CD8-positive, alpha-beta T cell (primary cell): ENCODE measurements at regions of chr18 and their contacts with region 1.

Region 1: GRCh38 chr18:67515945-67516538 is 478 bp downstream of the DSEL start:
- DNase-seq: peak; percentile 24 to 84 (median 60)
- ATAC-seq: peak; percentile 7
- H3K4me3 ChIP-seq: peak overlapping the region; percentile 72 to 79
- H3K4me3 Mint-ChIP-seq: peak overlapping the region; percentile 98
- H3K27ac ChIP-seq: peak overlapping the region in 1 of 2 experiments; percentile 43
- H3K27ac Mint-ChIP-seq: peak overlapping the region; percentile 70
- H3K4me1 ChIP-seq: peaks cover 12% of the 10 kb centered on the region
- H3K4me1 Mint-ChIP-seq: peaks cover 24% of the 10 kb centered on the region
- H3K27me3 ChIP-seq: no peaks in the 10 kb centered on the region
- H3K27me3 Mint-ChIP-seq: peaks cover 2% of the 10 kb centered on the region
- CTCF ChIP-seq: no peak

Region 2: GRCh38 chr18:66867653-66868052 is 648.4 kb before region 1 on chr18:
- CTCF ChIA-PET with region 1: no interaction called
- POLR2A ChIA-PET with region 1: no interaction called
- intact Hi-C with region 1: no loop called
- DNase-seq: no peak
- ATAC-seq: no peak
- H3K4me3 ChIP-seq: no peak overlapping the region
- H3K4me3 Mint-ChIP-seq: no peak overlapping the region
- H3K27ac ChIP-seq: no peak overlapping the region
- H3K27ac Mint-ChIP-seq: no peak overlapping the region
- H3K4me1 ChIP-seq: no peaks in the 10 kb centered on the region
- H3K4me1 Mint-ChIP-seq: no peaks in the 10 kb centered on the region
- H3K27me3 ChIP-seq: no peaks in the 10 kb centered on the region
- H3K27me3 Mint-ChIP-seq: no peaks in the 10 kb centered on the region
- CTCF ChIP-seq: no peak

Region 3: DNA sequence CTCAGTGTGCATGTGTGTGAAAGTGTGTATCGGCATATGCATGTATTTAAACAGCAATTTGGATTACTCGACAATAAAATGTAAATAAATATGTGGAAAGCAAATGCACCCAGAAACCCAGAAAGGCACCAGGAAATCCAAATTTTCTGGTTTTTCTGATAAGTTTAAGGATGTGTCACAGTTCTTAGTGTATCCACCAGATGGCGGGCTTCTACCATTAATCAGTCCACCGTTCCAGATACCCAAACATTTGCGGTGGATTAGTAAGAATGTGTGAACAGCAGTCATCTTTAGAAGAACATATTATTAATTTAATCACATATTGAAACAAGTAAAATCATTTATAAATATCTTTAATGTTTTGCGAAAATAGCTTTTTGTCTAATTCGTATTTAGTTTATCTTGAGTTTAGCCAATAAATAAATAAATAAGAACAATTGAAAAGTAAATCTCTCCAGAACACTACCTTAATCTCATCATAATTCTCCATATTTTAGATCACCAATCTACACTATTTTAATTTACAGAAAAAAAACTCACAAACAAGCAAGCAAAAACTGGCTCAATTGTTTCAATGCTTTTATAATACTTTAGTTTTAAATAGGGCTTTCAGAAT is 298.4 kb before region 1 on chr18:
- CTCF ChIA-PET with region 1: interaction called, 6 read pairs
- POLR2A ChIA-PET with region 1: no interaction called
- intact Hi-C with region 1: loop called (anchors 1 to 5 kb)
- DNase-seq: peak; percentile 6 to 76 (median 56)
- ATAC-seq: peak; percentile 93
- H3K4me3 ChIP-seq: no peak overlapping the region
- H3K4me3 Mint-ChIP-seq: no peak overlapping the region
- H3K27ac ChIP-seq: no peak overlapping the region
- H3K27ac Mint-ChIP-seq: no peak overlapping the region
- H3K4me1 ChIP-seq: no peaks in the 10 kb centered on the region
- H3K4me1 Mint-ChIP-seq: no peaks in the 10 kb centered on the region
- H3K27me3 ChIP-seq: no peaks in the 10 kb centered on the region
- H3K27me3 Mint-ChIP-seq: no peaks in the 10 kb centered on the region
- CTCF ChIP-seq: peak; percentile 88

Region 4: GRCh38 chr18:67243799-67244587 is 272.0 kb before region 1 on chr18:
- CTCF ChIA-PET with region 1: no interaction called
- POLR2A ChIA-PET with region 1: no interaction called
- intact Hi-C with region 1: loop called in 1 of 2 experiments (anchors 1 kb)
- DNase-seq: peak in 2 of 9 experiments; percentile 10 to 23
- ATAC-seq: peak; percentile 38
- H3K4me3 ChIP-seq: peak overlapping the region; percentile 21 to 33
- H3K4me3 Mint-ChIP-seq: peak overlapping the region; percentile 84
- H3K27ac ChIP-seq: peak overlapping the region; percentile 7 to 58
- H3K27ac Mint-ChIP-seq: peak overlapping the region; percentile 92
- H3K4me1 ChIP-seq: peaks cover 31% of the 10 kb centered on the region
- H3K4me1 Mint-ChIP-seq: peaks cover 38% of the 10 kb centered on the region
- H3K27me3 ChIP-seq: no peaks in the 10 kb centered on the region
- H3K27me3 Mint-ChIP-seq: no peaks in the 10 kb centered on the region
- CTCF ChIP-seq: no peak

Region 5: DNA sequence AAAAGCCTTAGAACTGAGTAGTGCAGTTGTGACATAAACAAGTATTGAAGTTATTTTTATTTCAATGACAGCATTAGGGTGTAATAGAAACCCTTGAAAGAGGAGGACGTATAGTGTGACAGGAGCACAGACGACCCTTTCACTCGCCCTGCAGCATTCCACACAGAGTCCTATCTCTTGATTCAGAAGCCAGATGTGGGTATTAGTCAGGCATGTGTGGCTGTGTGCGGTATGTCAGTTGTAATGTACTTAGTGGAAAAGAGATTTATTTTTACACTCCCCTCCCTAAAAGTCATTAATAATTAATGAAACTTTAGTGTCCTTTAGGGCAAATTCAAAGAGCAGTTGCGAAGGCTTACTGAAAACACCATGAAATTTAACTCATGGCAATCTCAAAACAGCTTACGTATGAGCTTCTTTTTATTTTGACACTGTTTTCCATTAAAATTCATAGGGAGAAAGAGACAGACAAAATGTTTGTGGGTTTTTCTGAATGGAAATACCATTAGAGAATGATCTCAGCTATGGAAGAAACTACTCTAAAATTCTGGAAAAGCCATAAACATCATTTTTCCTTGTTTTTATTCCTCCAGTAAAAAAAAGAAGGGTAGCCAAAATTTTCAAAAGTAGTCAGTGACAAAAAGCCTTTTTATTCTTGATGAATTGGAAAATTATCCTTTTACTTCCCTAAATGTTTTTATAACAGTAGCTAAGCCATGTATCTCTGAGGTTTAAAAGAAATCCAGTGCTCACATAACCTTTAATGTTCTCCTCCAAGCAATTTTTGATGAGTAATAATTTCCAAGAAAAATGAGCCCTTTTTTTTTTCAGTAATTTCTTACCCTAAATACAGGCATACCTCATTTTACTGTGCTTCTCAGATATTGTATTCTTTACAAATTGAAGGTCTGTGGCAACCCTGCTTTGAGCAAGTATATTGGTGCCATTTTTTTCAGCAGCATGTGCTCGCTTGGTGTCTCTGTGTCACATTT is 84.4 kb after region 1 on chr18:
- CTCF ChIA-PET with region 1: no interaction called
- POLR2A ChIA-PET with region 1: no interaction called
- intact Hi-C with region 1: no loop called
- DNase-seq: no peak
- ATAC-seq: no peak
- H3K4me3 ChIP-seq: no peak overlapping the region
- H3K4me3 Mint-ChIP-seq: no peak overlapping the region
- H3K27ac ChIP-seq: no peak overlapping the region
- H3K27ac Mint-ChIP-seq: no peak overlapping the region
- H3K4me1 ChIP-seq: no peaks in the 10 kb centered on the region
- H3K4me1 Mint-ChIP-seq: no peaks in the 10 kb centered on the region
- H3K27me3 ChIP-seq: no peaks in the 10 kb centered on the region
- H3K27me3 Mint-ChIP-seq: peaks cover 2% of the 10 kb centered on the region
- CTCF ChIP-seq: no peak

Region 6: DNA sequence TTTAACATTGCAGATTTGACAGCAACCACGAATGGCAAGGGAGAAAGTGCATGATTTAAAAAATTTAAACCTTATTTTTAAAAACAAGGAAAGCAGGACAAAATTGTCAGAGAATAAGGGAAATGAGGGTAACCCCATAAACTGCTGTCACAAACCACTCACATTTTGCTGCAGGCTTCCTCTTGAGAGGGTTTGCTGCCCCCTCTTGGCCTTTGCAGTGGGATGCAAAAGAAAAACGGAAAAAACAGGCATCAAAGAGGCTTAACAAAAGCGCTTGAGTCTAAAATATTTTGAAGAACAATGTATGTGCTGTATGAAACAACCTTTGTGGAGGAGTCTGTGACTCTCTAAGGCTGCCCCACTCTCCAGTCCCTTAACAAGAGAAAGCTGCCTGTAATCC is 1107.3 kb after region 1 on chr18:
- CTCF ChIA-PET with region 1: no interaction called
- POLR2A ChIA-PET with region 1: no interaction called
- intact Hi-C with region 1: loop called in 1 of 2 experiments (anchors 2 kb)
- DNase-seq: peak in 4 of 9 experiments; percentile 19 to 50 (median 41)
- ATAC-seq: no peak
- H3K4me3 ChIP-seq: no peak overlapping the region
- H3K4me3 Mint-ChIP-seq: no peak overlapping the region
- H3K27ac ChIP-seq: no peak overlapping the region
- H3K27ac Mint-ChIP-seq: no peak overlapping the region
- H3K4me1 ChIP-seq: no peaks in the 10 kb centered on the region
- H3K4me1 Mint-ChIP-seq: no peaks in the 10 kb centered on the region
- H3K27me3 ChIP-seq: no peaks in the 10 kb centered on the region
- H3K27me3 Mint-ChIP-seq: peaks cover 8% of the 10 kb centered on the region
- CTCF ChIP-seq: peak; percentile 20

Region 7: GRCh38 chr18:68660354-68661183 is 1144.5 kb after region 1 on chr18:
- CTCF ChIA-PET with region 1: interaction called, 4 read pairs
- POLR2A ChIA-PET with region 1: no interaction called
- intact Hi-C with region 1: loop called in 1 of 2 experiments (anchors 1 kb)
- DNase-seq: peak in 2 of 9 experiments; percentile 39 to 52
- ATAC-seq: no peak
- H3K4me3 ChIP-seq: no peak overlapping the region
- H3K4me3 Mint-ChIP-seq: no peak overlapping the region
- H3K27ac ChIP-seq: no peak overlapping the region
- H3K27ac Mint-ChIP-seq: no peak overlapping the region
- H3K4me1 ChIP-seq: no peaks in the 10 kb centered on the region
- H3K4me1 Mint-ChIP-seq: no peaks in the 10 kb centered on the region
- H3K27me3 ChIP-seq: no peaks in the 10 kb centered on the region
- H3K27me3 Mint-ChIP-seq: peaks cover 2% of the 10 kb centered on the region
- CTCF ChIP-seq: peak; percentile 64

Region 8: GRCh38 chr18:68714609-68715496 is 1198.8 kb after region 1 on chr18 and contains the start of gene TMX3:
- CTCF ChIA-PET with region 1: no interaction called
- POLR2A ChIA-PET with region 1: no interaction called
- intact Hi-C with region 1: loop called (anchors 2 to 5 kb)
- DNase-seq: peak; percentile 83 to 97 (median 91)
- ATAC-seq: peak; percentile 98
- H3K4me3 ChIP-seq: peak within 1 kb of the TSS; percentile 60 to 81
- H3K4me3 Mint-ChIP-seq: peak within 1 kb of the TSS; percentile 97
- H3K27ac ChIP-seq: peak within 1 kb of the TSS; percentile 57 to 60
- H3K27ac Mint-ChIP-seq: peak within 1 kb of the TSS; percentile 94
- H3K4me1 ChIP-seq: peaks cover 31% of the 10 kb centered on the region
- H3K4me1 Mint-ChIP-seq: peaks cover 50% of the 10 kb centered on the region
- H3K27me3 ChIP-seq: no peaks in the 10 kb centered on the region
- H3K27me3 Mint-ChIP-seq: no peaks in the 10 kb centered on the region
- CTCF ChIP-seq: no peak
- total RNA-seq, gene TMX3: 28.3 to 28.5 TPM